ENCODE measurements at regions of chr11 and their contacts with region 1.

Region 1: DNA sequence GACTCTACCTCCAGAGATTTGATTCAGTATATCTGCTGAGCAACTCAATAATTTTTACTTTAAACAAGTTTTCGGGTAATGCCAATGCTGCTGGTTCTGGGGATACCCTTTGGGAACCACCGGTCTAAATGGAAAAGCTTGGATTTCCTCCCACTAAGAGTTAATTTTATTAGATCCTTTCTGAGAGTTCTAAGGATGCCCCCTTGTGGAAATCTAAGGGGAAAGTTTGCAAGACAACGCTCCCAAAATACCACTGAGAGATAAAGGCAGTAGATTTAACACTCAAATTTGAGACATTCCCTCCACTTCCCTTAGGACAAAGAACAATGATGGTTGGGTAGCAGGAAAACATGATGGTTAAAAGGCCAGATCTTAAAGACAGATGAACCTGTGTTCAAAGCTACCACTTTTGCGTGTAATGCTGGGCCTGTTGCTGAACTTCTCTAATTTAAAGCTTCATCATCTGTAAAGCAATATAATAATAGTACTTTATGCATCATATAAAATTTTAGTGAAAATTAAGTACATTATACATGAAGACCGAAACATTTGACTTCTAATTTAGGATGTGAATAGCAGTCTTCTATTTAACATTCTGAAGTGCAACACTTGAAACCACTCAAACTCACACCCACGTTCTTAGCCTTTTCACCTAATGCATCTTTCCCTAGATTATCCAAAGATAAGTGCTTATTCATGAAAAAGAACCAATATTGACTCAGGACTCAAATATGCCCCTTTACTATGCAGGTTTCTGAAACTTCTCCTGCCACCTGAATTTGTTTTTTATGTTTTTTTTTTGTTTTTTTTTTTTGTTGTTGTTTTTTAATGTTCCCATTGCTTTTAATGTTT is 110.1 kb upstream of the LUZP2 start:
- DNase-seq: peak; percentile 1
- H3K4me3 ChIP-seq: no peak overlapping the region
- CTCF ChIP-seq: peak; percentile 36

Region 2: GRCh38 chr11:23021287-23021863 is 1365.4 kb before region 1 on chr11:
- CTCF ChIA-PET with region 1: interaction called, 16 read pairs
- POLR2A ChIA-PET with region 1: no interaction called
- DNase-seq: no peak
- H3K4me3 ChIP-seq: no peak overlapping the region
- CTCF ChIP-seq: peak; percentile 65

Region 3: DNA sequence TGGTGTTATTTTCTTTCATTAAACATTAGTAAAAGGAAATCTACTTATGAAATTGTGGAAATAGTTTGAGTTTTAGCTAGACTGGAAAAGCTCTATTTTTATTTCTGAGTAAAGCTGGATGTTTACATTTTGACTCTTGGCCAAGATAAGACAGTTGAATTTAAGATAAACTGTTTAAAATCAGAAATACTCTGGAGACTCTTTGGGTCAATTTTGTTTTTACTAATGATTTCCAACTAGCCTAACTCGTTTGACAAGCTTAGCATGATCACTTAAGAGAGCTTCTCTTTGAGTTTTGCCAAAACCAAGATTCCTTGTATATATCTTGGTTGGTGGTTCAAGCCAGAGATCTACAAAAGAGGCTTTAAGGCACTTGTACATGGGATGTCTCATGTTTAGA is 614.7 kb before region 1 on chr11:
- CTCF ChIA-PET with region 1: no interaction called
- POLR2A ChIA-PET with region 1: no interaction called
- DNase-seq: no peak
- H3K4me3 ChIP-seq: no peak overlapping the region
- CTCF ChIP-seq: no peak

Region 4: DNA sequence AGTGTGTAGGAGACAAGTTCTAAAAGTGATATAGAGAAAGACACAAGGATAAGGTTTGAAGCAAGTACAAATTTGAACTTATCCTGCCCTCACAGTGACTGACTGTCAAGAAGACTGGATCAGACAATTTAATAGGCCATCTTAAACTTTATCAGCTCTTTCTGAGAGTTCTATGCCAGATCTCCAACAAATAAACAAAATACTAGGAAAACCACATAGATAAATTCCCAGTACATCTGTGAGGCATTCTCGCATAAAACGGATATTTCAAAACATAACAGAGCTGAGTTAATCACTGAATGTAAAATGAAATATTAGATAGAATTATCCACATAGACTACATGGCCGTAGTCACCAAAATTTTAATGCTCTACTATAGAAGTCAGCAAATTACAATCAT is 10.8 kb before region 1 on chr11:
- CTCF ChIA-PET with region 1: interaction called, 11 read pairs
- POLR2A ChIA-PET with region 1: no interaction called
- DNase-seq: no peak
- H3K4me3 ChIP-seq: no peak overlapping the region
- CTCF ChIP-seq: no peak

Region 5: GRCh38 chr11:24496736-24497725 is 110.3 kb after region 1 on chr11 and contains the start of gene LUZP2:
- CTCF ChIA-PET with region 1: no interaction called
- POLR2A ChIA-PET with region 1: no interaction called
- DNase-seq: no peak
- H3K4me3 ChIP-seq: peak within 1 kb of the TSS; percentile 62
- CTCF ChIP-seq: no peak

Region 6: GRCh38 chr11:24617856-24618255 is 231.1 kb after region 1 on chr11:
- CTCF ChIA-PET with region 1: no interaction called
- POLR2A ChIA-PET with region 1: no interaction called
- DNase-seq: no peak
- H3K4me3 ChIP-seq: no peak overlapping the region
- CTCF ChIP-seq: no peak

Measured in AG04449 (cell line).